Naive thymus-derived CD8-positive, alpha-beta T cell (primary cell): ENCODE measurements at regions of chr11 and their contacts with region 1.

Region 1: DNA sequence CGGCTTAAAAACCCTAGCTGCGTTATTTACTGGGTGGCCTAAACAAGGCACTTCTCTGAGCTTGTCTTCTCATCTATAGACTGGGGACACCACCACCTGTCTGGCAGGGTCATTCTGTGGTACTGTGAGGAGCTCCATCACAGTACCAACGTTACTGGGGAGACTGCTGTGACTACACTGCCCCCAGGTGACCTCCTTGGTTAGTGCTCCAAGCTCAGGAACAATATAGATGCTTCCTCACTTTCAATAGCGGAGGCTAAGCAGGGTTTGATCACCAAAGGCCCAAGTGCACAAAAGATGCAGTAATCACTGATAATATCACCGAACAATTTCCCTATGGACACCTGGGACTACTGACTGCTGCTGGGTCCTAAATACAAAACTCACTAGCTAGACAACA is 18.8 kb downstream of the PRPF19 start:
- DNase-seq: peak in 7 of 10 donors; percentile 15 to 72 (median 44)
- ATAC-seq: peak; percentile 88 to 91
- H3K4me3 Mint-ChIP-seq: no peak overlapping the region
- H3K27ac Mint-ChIP-seq: peak overlapping the region in 1 of 10 donors; percentile 24
- H3K4me1 Mint-ChIP-seq: peaks cover 6 to 20% (median 13%) of the 10 kb centered on the region in 4 donors
- H3K27me3 Mint-ChIP-seq: no peaks in the 10 kb centered on the region

Region 2: GRCh38 chr11:60753309-60753708 is 134.2 kb before region 1 on chr11:
- POLR2A ChIA-PET with region 1: no interaction called
- DNase-seq: no peak
- ATAC-seq: no peak
- H3K4me3 Mint-ChIP-seq: no peak overlapping the region
- H3K27ac Mint-ChIP-seq: peak overlapping the region in 1 of 10 donors; percentile 7
- H3K4me1 Mint-ChIP-seq: no peaks in the 10 kb centered on the region
- H3K27me3 Mint-ChIP-seq: peaks cover 17 to 40% (median 20%) of the 10 kb centered on the region in 5 donors

Region 3: DNA sequence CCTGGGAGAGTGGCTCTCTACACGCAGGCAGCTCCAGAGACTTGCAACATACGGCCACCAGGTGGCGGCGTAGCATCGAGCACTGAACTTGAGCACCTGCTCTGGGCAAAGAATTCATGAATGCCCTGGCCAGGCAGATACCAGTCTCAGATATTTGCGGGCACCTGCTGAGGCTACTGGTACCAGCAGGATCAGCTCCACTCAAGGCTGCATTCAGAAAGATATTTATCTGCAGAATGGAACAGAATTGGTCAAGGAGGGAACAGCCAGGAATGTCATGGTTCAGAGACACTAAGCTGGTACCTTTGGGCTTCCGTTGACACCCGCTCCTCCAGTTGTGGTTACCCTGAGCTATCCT is 56.4 kb before region 1 on chr11:
- POLR2A ChIA-PET with region 1: interaction called, 11 read pairs
- DNase-seq: peak; percentile 66 to 91 (median 75)
- ATAC-seq: peak; percentile 84 to 95
- H3K4me3 Mint-ChIP-seq: peak overlapping the region in 3 of 10 donors; percentile 70 to 77 (median 75)
- H3K27ac Mint-ChIP-seq: peak overlapping the region in 3 of 10 donors; percentile 73 to 87 (median 81)
- H3K4me1 Mint-ChIP-seq: peaks cover 0 to 13% (median 4%) of the 10 kb centered on the region in 4 donors
- H3K27me3 Mint-ChIP-seq: peaks cover 0 to 2% (median 0%) of the 10 kb centered on the region in 5 donors